CD8-positive, alpha-beta T cell (primary cell): ENCODE measurements at regions of chr19 and their contacts with region 1.

Region 1: GRCh38 chr19:9785367-9786331 is 17.1 kb upstream of the ZNF846 start:
- DNase-seq: peak; percentile 90 to 98 (median 97)
- ATAC-seq: peak; percentile 82
- H3K4me3 ChIP-seq: peak overlapping the region; percentile 95 to 97
- H3K4me3 Mint-ChIP-seq: peak overlapping the region; percentile 88
- H3K27ac ChIP-seq: peak overlapping the region; percentile 87 to 98
- H3K27ac Mint-ChIP-seq: peak overlapping the region; percentile 95
- H3K4me1 ChIP-seq: peaks cover 10% of the 10 kb centered on the region
- H3K4me1 Mint-ChIP-seq: peaks cover 29% of the 10 kb centered on the region
- H3K27me3 ChIP-seq: no peaks in the 10 kb centered on the region
- H3K27me3 Mint-ChIP-seq: no peaks in the 10 kb centered on the region
- CTCF ChIP-seq: no peak

Region 2: GRCh38 chr19:9538183-9539058 is 247.2 kb before region 1 on chr19 and contains the start of gene ZNF426:
- CTCF ChIA-PET with region 1: no interaction called
- POLR2A ChIA-PET with region 1: no interaction called
- intact Hi-C with region 1: loop called in 1 of 2 experiments (anchors 5 kb)
- DNase-seq: peak; percentile 77 to 92 (median 86)
- ATAC-seq: peak; percentile 94
- H3K4me3 ChIP-seq: peak within 1 kb of the TSS; percentile 89 to 93
- H3K4me3 Mint-ChIP-seq: peak within 1 kb of the TSS; percentile 99
- H3K27ac ChIP-seq: peak within 1 kb of the TSS; percentile 91
- H3K27ac Mint-ChIP-seq: peak within 1 kb of the TSS; percentile 100
- H3K4me1 ChIP-seq: peaks cover 17% of the 10 kb centered on the region
- H3K4me1 Mint-ChIP-seq: peaks cover 35% of the 10 kb centered on the region
- H3K27me3 ChIP-seq: no peaks in the 10 kb centered on the region
- H3K27me3 Mint-ChIP-seq: no peaks in the 10 kb centered on the region
- CTCF ChIP-seq: no peak
- total RNA-seq, gene ZNF426: 16.6 to 17.9 TPM